A673 (cell line): ENCODE measurements at regions of chr6 and their contacts with region 1.

Region 1: GRCh38 chr6:29649701-29650673 is 6.9 kb upstream of the MOG start:
- DNase-seq: peak; percentile 98
- H3K4me3 ChIP-seq: peak overlapping the region; percentile 44
- H3K27ac ChIP-seq: peak overlapping the region; percentile 31
- H3K4me1 ChIP-seq: no peaks in the 10 kb centered on the region
- H3K27me3 ChIP-seq: no peaks in the 10 kb centered on the region
- CTCF ChIP-seq: peak; percentile 94

Region 2: GRCh38 chr6:29632789-29633533 is 17.0 kb before region 1 on chr6 and contains the start of gene GABBR1:
- CTCF ChIA-PET with region 1: interaction called, 15 read pairs
- POLR2A ChIA-PET with region 1: interaction called, 3 read pairs
- intact Hi-C with region 1: no loop called
- DNase-seq: peak; percentile 96
- H3K4me3 ChIP-seq: peak within 1 kb of the TSS; percentile 84
- H3K27ac ChIP-seq: peak within 1 kb of the TSS; percentile 77
- H3K4me1 ChIP-seq: peaks cover 33% of the 10 kb centered on the region
- H3K27me3 ChIP-seq: no peaks in the 10 kb centered on the region
- CTCF ChIP-seq: no peak
- total RNA-seq, gene GABBR1: 72.4 and 81.3 TPM in 2 replicates

Region 3: GRCh38 chr6:29676981-29677601 is 27.1 kb after region 1 on chr6:
- CTCF ChIA-PET with region 1: interaction called, 12 read pairs
- POLR2A ChIA-PET with region 1: no interaction called
- intact Hi-C with region 1: no loop called
- DNase-seq: peak; percentile 31
- H3K4me3 ChIP-seq: no peak overlapping the region
- H3K27ac ChIP-seq: no peak overlapping the region
- H3K4me1 ChIP-seq: no peaks in the 10 kb centered on the region
- H3K27me3 ChIP-seq: no peaks in the 10 kb centered on the region
- CTCF ChIP-seq: no peak

Region 4: GRCh38 chr6:29696155-29697125 is 46.5 kb after region 1 on chr6:
- CTCF ChIA-PET with region 1: interaction called, 12 read pairs
- POLR2A ChIA-PET with region 1: no interaction called
- intact Hi-C with region 1: loop called (anchors 2 kb)
- DNase-seq: peak; percentile 48
- H3K4me3 ChIP-seq: no peak overlapping the region
- H3K27ac ChIP-seq: no peak overlapping the region
- H3K4me1 ChIP-seq: no peaks in the 10 kb centered on the region
- H3K27me3 ChIP-seq: no peaks in the 10 kb centered on the region
- CTCF ChIP-seq: peak; percentile 66

Region 5: DNA sequence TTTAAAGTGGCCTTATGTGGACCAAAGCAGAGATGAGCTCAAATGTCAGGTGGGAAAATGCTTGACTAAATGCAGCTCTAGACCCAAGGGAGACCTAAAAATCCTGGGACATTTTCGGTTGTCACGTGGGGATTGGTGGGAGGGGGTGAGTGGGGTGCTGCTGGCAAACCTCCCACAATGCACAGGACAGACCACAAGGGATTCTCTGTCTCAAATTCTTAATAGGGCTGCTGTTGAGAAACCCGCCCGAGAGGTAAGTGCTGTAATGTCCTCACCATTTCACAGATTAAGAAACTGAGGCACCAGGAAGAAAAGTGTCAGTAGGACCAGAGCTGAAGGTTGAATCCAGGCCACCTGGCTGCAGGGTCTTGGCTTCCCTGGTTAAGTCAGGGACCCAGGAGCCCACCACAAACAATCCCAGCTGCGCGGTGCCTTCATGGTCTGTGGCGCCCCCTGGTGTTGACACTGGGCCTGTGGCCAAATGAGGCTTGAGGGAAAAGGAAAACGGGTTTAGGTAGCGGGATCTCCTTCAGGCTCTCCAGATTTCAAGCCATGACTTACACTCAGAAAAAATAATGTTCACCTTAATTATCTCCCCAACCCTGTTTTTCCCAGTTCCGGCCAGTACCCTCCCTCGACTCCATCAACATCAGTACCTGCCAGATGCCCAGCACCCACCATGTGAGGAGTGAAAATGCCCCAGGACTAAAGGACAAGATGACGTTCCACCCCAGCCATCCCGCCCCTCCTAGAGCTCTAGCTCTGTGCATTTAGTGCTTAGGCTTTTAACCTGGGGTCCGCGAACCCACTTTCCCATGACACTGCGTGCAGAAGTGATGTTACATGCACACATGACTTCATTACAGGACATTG is 184.8 kb after region 1 on chr6:
- CTCF ChIA-PET with region 1: no interaction called
- POLR2A ChIA-PET with region 1: no interaction called
- intact Hi-C with region 1: loop called (anchors 5 kb)
- DNase-seq: peak; percentile 33
- H3K4me3 ChIP-seq: no peak overlapping the region
- H3K27ac ChIP-seq: no peak overlapping the region
- H3K4me1 ChIP-seq: no peaks in the 10 kb centered on the region
- H3K27me3 ChIP-seq: peaks cover 35% of the 10 kb centered on the region
- CTCF ChIP-seq: peak; percentile 89